Activated CD8-positive, alpha-beta T cell treated with anti-CD3 and anti-CD28 coated beads, Interleukin-2, amount 10 ng/mL, durations not matched to agents 7 days and 5 days (primary cell): ENCODE measurements at regions of chr6 and their contacts with region 1.

Region 1: DNA sequence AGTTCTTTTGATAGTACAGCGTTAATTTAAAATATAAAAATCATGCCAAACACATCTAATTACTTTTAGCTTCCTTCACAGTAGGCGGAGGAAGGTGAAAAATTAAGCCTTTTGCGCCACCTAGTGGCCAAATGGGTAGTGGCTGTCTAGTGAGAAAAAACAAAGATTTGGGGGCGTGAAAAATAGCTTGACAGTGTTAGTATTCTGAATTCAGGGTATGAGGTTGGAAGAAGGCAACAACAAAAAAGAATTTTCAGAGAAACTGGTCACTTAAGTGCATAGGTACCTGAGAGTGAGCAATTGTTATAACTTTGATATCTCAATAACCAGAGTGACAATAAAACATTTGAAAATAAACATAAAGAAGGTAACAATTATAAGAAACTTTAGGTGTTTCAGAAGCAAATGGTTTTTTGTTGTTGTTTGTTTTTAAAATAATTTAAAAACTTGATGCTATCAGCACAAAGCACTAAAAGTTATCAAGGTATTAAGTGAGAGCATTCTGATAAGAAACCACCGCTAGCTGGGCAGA is 14.3 kb downstream of the PSMB9 start:
- DNase-seq: peak; percentile 93
- ATAC-seq: peak; percentile 77
- H3K4me3 Mint-ChIP-seq: no peak overlapping the region
- H3K27ac Mint-ChIP-seq: no peak overlapping the region
- H3K4me1 Mint-ChIP-seq: peaks cover 35% of the 10 kb centered on the region
- H3K27me3 Mint-ChIP-seq: peaks cover 3% of the 10 kb centered on the region

Region 2: DNA sequence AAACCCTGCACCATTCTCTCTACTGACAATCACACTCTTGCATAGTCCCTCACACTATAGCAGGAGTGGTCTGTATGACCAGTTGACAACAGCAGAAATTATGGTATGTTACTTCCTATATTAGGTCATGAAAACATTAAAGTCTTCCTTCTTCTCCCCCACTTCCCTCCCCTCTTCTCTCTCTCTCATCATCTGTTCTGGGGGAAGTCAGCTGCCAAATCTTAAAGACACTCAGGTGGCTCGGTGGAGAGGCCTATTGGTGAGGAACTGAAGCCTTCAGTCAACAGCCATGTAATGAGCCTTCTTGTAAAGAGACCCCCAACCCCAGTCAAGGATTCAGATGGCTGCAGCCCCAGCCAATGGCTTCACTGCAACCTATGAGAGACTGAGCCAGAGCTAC is 485.6 kb before region 1 on chr6:
- CTCF ChIA-PET with region 1: no interaction called
- POLR2A ChIA-PET with region 1: no interaction called
- DNase-seq: no peak
- ATAC-seq: peak; percentile 15
- H3K4me3 Mint-ChIP-seq: no peak overlapping the region
- H3K27ac Mint-ChIP-seq: no peak overlapping the region
- H3K4me1 Mint-ChIP-seq: no peaks in the 10 kb centered on the region
- H3K27me3 Mint-ChIP-seq: peaks cover 13% of the 10 kb centered on the region

Region 3: DNA sequence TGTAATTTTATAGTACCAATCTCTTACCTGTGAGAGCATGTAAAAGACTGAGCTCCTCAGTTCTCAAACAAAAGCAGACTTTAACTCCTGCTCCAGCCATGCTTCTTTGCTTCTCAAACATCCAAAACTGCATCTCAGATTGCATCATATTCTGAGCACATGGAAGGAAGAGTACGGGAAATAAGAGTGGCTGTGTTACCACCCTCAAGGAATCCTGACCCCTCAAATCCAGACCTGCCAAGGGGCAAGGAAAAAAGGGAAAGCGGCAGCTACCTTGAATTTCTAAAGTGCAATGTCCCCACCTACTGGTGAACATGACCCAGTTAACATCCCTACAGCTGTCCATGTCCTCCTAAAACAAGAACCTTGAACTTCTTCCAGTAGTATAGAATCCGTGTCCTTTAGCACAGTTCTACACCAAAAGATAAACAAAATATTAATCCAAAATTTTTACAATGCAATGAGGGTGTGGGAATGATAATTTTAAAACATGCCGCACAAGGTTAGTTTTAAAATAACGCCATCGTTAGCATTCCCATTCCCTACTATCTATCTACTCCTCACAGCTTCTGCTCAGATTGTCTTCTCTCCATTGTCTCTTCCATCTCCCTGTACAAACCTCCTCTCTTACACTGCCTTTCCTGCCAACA is 167.8 kb before region 1 on chr6:
- CTCF ChIA-PET with region 1: interaction called, 25 read pairs
- POLR2A ChIA-PET with region 1: no interaction called
- DNase-seq: peak; percentile 47
- ATAC-seq: peak; percentile 69
- H3K4me3 Mint-ChIP-seq: no peak overlapping the region
- H3K27ac Mint-ChIP-seq: no peak overlapping the region
- H3K4me1 Mint-ChIP-seq: peaks cover 2% of the 10 kb centered on the region
- H3K27me3 Mint-ChIP-seq: peaks cover 60% of the 10 kb centered on the region

Region 4: GRCh38 chr6:32796848-32797776 is 71.2 kb before region 1 on chr6:
- CTCF ChIA-PET with region 1: interaction called, 28 read pairs
- POLR2A ChIA-PET with region 1: interaction called, 3 read pairs
- DNase-seq: peak; percentile 83
- ATAC-seq: peak; percentile 73
- H3K4me3 Mint-ChIP-seq: peak overlapping the region; percentile 57
- H3K27ac Mint-ChIP-seq: peak overlapping the region; percentile 33
- H3K4me1 Mint-ChIP-seq: peaks cover 37% of the 10 kb centered on the region
- H3K27me3 Mint-ChIP-seq: peaks cover 40% of the 10 kb centered on the region

Region 5: DNA sequence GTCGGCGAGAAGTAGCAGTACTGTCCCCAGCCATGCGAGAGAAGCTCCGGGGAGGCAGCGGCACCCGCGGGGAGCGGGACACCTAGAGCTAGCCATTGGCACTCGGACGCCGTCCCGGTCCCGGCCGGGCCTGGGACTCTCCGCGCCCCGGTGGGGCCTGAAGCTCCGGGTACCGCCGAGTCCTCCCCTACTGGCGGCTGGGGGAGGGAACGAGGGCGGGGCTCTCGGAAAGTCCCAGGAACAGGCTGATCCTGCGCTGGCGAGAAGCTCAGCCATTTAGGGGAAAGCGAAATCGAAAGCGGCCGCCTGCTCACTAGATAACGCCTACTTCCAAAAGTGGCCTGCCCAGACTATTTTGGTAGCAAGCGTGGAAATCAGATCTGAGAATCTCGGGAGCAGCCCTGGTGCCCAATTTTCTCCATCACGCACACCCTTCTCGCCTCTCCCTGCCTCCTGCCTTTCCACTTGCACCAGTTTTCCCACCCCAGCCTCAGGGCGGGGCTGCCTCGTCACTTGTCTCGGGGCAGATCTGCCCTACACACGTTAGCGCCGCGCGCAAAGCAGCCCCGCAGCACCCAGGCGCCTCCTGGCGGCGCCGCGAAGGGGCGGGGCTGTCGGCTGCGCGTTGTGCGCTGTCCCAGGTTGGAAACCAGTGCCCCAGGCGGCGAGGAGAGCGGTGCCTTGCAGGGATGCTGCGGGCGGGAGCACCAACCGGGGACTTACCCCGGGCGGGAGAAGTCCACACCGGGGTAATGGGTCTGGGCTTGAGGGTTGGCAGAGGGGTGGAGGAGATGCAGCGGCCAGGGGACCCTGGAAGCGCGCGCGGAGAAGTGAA is 14.6 kb before region 1 on chr6 and contains the starts of genes PSMB9 and TAP1:
- CTCF ChIA-PET with region 1: interaction called, 236 read pairs
- POLR2A ChIA-PET with region 1: interaction called, 82 read pairs
- DNase-seq: peak; percentile 97
- ATAC-seq: peak; percentile 85
- H3K4me3 Mint-ChIP-seq: peak within 1 kb of the TSS; percentile 97
- H3K27ac Mint-ChIP-seq: peak within 1 kb of the TSS; percentile 100
- H3K4me1 Mint-ChIP-seq: peaks cover 58% of the 10 kb centered on the region
- H3K27me3 Mint-ChIP-seq: no peaks in the 10 kb centered on the region
- total RNA-seq, gene PSMB9: 319 to 325 TPM
- total RNA-seq, gene TAP1: 319 to 328 TPM

Region 6: DNA sequence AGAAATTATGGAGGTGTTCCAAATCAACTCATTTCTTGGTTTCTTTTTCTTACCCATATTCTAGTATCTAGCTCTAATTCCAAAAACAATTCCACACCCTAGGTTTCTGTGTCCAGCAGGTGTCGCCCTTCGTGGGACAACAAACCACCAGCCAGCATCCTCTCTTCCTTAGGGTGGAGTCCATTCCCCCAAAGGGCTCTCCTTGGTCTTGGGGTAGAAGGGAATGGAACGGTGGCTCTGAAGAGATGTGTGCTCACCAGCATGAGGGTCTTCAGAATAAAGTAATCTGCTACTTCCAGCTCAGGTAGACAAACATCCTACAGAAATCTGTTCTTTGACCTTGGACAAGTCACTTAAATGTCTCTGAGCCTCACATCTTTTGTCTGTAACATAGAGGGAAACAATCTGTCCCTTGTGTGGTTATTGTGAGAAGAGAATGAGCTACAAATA is 65.3 kb after region 1 on chr6:
- CTCF ChIA-PET with region 1: interaction called, 12 read pairs
- POLR2A ChIA-PET with region 1: no interaction called
- DNase-seq: peak; percentile 80
- ATAC-seq: peak; percentile 68
- H3K4me3 Mint-ChIP-seq: no peak overlapping the region
- H3K27ac Mint-ChIP-seq: no peak overlapping the region
- H3K4me1 Mint-ChIP-seq: peaks cover 16% of the 10 kb centered on the region
- H3K27me3 Mint-ChIP-seq: peaks cover 12% of the 10 kb centered on the region

Region 7: GRCh38 chr6:33007831-33008400 is 139.6 kb after region 1 on chr6:
- CTCF ChIA-PET with region 1: no interaction called
- POLR2A ChIA-PET with region 1: no interaction called
- DNase-seq: no peak
- ATAC-seq: no peak
- H3K4me3 Mint-ChIP-seq: peak overlapping the region; percentile 27
- H3K27ac Mint-ChIP-seq: no peak overlapping the region
- H3K4me1 Mint-ChIP-seq: peaks cover 22% of the 10 kb centered on the region
- H3K27me3 Mint-ChIP-seq: peaks cover 6% of the 10 kb centered on the region

Region 8: GRCh38 chr6:33061987-33062386 is 193.7 kb after region 1 on chr6:
- CTCF ChIA-PET with region 1: no interaction called
- POLR2A ChIA-PET with region 1: no interaction called
- DNase-seq: no peak
- ATAC-seq: peak; percentile 49
- H3K4me3 Mint-ChIP-seq: no peak overlapping the region
- H3K27ac Mint-ChIP-seq: no peak overlapping the region
- H3K4me1 Mint-ChIP-seq: peaks cover 2% of the 10 kb centered on the region
- H3K27me3 Mint-ChIP-seq: peaks cover 19% of the 10 kb centered on the region